ENCODE measurements at regions of chr11 and their contacts with region 1.

Region 1: GRCh38 chr11:31958076-31958735 is 132.7 kb upstream of the RCN1 start:
- DNase-seq: peak; percentile 9
- ATAC-seq: peak; percentile 98
- H3K4me3 ChIP-seq: no peak overlapping the region
- H3K27ac ChIP-seq: no peak overlapping the region
- H3K4me1 ChIP-seq: no peaks in the 10 kb centered on the region
- H3K27me3 ChIP-seq: no peaks in the 10 kb centered on the region
- CTCF ChIP-seq: peak; percentile 88 to 91 (median 91)
- EP300 ChIP-seq: no peak
- POLR2A ChIP-seq: no peak
- RAD21 ChIP-seq: peak; percentile 91

Region 2: DNA sequence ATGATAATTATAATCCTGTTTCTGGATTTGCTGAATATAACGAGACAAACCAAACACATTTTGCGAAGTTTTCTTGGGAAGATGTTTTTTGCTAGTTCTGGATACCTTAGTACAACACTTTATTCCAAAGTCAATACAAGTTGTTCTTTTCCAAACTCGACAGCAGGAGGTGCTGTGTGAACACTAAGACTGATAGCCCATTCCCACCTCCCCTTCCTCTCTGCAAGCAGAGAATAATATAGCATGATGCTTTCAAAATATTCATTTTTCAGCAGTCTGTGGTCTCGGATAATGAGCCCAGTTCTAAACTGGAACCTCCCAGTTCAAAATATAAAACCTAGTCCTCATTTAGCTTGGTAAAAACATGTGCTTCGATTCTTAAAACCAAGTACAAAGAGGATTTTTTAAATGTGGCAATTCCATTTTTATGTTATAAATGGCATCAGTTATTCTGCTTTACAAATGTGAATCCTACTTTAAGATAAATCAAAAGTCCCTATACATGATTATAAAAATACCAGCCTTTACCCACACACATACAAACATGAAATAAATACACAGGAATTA is 717.8 kb before region 1 on chr11:
- CTCF ChIA-PET with region 1: interaction called, 22 read pairs
- POLR2A ChIA-PET with region 1: no interaction called
- RAD21 ChIA-PET with region 1: interaction called, 6 read pairs
- SMC1A ChIA-PET with region 1: interaction called, 15 read pairs
- in situ Hi-C with region 1: no loop called
- intact Hi-C with region 1: loop called (anchors 2 kb)
- DNase-seq: no peak
- ATAC-seq: peak; percentile 68
- H3K4me3 ChIP-seq: no peak overlapping the region
- H3K27ac ChIP-seq: no peak overlapping the region
- H3K4me1 ChIP-seq: no peaks in the 10 kb centered on the region
- H3K27me3 ChIP-seq: no peaks in the 10 kb centered on the region
- CTCF ChIP-seq: peak; percentile 50 to 54 (median 54)
- EP300 ChIP-seq: no peak
- POLR2A ChIP-seq: no peak
- RAD21 ChIP-seq: peak; percentile 61

Region 3: DNA sequence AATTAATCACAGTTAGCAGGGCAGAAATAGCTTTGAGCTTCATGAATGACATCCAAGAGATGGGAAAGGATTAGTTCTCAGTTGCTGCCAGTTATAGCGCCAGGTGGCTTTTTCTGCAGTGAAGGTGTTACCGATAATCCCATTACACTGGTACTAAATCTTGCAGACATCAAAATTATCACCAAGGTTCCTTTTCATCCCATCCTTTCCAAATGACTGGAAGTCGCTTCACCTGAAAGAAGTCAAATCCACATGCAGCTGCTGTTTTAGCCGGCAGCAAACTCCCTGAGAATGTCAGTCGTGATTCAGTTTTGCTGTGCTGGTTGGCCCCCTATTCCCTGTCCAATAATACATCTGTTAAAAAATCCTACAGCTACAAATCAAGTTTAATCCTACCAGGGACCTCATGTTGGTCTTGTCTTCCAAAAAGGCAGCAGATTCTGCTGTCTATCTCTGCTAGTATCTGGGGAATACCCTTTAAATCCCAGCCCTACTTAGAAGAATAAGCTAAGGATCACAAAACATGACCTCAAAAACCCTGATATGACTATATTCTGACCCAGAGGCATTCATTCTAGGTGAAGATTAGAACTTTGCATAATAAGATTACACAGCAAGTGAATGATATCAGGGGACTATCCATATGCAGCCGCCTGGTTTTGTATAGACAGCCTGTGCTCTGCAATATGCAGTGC is 480.5 kb before region 1 on chr11:
- CTCF ChIA-PET with region 1: interaction called, 11 read pairs
- POLR2A ChIA-PET with region 1: no interaction called
- RAD21 ChIA-PET with region 1: interaction called, 6 read pairs
- SMC1A ChIA-PET with region 1: interaction called, 3 read pairs
- in situ Hi-C with region 1: no loop called
- intact Hi-C with region 1: no loop called
- DNase-seq: no peak
- ATAC-seq: peak; percentile 19; the same call in 2 of the 3 replicates
- H3K4me3 ChIP-seq: no peak overlapping the region
- H3K27ac ChIP-seq: no peak overlapping the region
- H3K4me1 ChIP-seq: no peaks in the 10 kb centered on the region
- H3K27me3 ChIP-seq: no peaks in the 10 kb centered on the region
- CTCF ChIP-seq: no peak
- EP300 ChIP-seq: no peak
- POLR2A ChIP-seq: no peak
- RAD21 ChIP-seq: no peak

Region 4: GRCh38 chr11:31870609-31871309 is 87.4 kb before region 1 on chr11:
- CTCF ChIA-PET with region 1: interaction called, 36 read pairs
- POLR2A ChIA-PET with region 1: no interaction called
- RAD21 ChIA-PET with region 1: interaction called, 11 read pairs
- SMC1A ChIA-PET with region 1: interaction called, 26 read pairs
- in situ Hi-C with region 1: no loop called
- intact Hi-C with region 1: loop called (anchors 5 kb)
- DNase-seq: no peak
- ATAC-seq: peak; percentile 84
- H3K4me3 ChIP-seq: no peak overlapping the region
- H3K27ac ChIP-seq: no peak overlapping the region
- H3K4me1 ChIP-seq: no peaks in the 10 kb centered on the region
- H3K27me3 ChIP-seq: no peaks in the 10 kb centered on the region; a peak in 2 of 4 replicates
- CTCF ChIP-seq: peak; percentile 59 to 66 (median 64); a peak in 5 of 6 replicates
- EP300 ChIP-seq: no peak
- POLR2A ChIP-seq: no peak
- RAD21 ChIP-seq: peak; percentile 90

Region 5: DNA sequence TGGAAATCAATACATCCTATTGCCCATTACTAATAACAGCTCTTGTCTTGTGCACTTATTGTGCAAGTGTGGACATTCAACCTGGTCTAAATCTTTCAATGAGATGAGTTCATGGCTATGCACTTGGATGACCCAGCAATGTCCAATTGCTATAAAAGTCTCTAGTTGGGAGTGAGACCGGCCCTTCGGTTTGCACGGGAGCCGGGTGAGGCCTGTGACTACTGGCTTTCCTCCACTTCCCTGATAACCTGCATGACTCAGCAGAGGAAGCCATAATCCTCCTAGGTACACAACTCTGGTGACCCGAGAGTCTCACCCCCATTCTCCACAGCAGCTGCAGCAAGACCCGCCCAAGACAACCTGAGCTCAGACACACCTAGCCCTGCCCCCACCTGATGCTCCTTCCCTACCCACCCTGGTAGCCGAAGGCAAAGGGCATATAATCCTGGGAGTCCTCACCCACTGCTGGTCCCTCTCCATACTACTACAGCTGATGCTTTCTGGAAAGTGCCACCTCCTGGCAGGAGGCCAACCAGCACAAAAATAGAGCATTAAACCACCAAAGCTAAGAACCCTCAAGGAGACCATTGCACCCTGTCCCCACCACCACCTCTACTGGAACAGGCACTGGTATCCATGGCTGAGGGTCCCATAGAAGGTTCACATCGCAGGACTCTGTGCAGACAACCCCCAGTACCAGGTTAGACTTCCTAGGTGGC is 11.0 kb before region 1 on chr11:
- CTCF ChIA-PET with region 1: interaction called, 45 read pairs
- POLR2A ChIA-PET with region 1: no interaction called
- RAD21 ChIA-PET with region 1: interaction called, 6 read pairs
- SMC1A ChIA-PET with region 1: interaction called, 9 read pairs
- in situ Hi-C with region 1: no loop called
- intact Hi-C with region 1: no loop called
- DNase-seq: no peak
- ATAC-seq: no peak
- H3K4me3 ChIP-seq: no peak overlapping the region
- H3K27ac ChIP-seq: no peak overlapping the region
- H3K4me1 ChIP-seq: peaks cover 24% of the 10 kb centered on the region
- H3K27me3 ChIP-seq: no peaks in the 10 kb centered on the region
- CTCF ChIP-seq: no peak
- EP300 ChIP-seq: no peak
- POLR2A ChIP-seq: no peak
- RAD21 ChIP-seq: no peak

Region 6: GRCh38 chr11:31995525-31996094 is 37.4 kb after region 1 on chr11:
- CTCF ChIA-PET with region 1: interaction called, 10 read pairs
- POLR2A ChIA-PET with region 1: no interaction called
- RAD21 ChIA-PET with region 1: interaction called, 3 read pairs
- SMC1A ChIA-PET with region 1: interaction called, 4 read pairs
- in situ Hi-C with region 1: no loop called
- intact Hi-C with region 1: no loop called
- DNase-seq: peak; percentile 26
- ATAC-seq: peak; percentile 92
- H3K4me3 ChIP-seq: no peak overlapping the region; the same call in 1 of the 2 replicates
- H3K27ac ChIP-seq: no peak overlapping the region
- H3K4me1 ChIP-seq: peaks cover 4% of the 10 kb centered on the region
- H3K27me3 ChIP-seq: no peaks in the 10 kb centered on the region
- CTCF ChIP-seq: no peak
- EP300 ChIP-seq: no peak
- POLR2A ChIP-seq: peak; percentile 52; the same call in 1 of the 2 replicates
- RAD21 ChIP-seq: no peak

Measured in GM12878 (cell line).